A549 (cell line): ENCODE measurements at regions of chr4 and their contacts with region 1.

Region 1: DNA sequence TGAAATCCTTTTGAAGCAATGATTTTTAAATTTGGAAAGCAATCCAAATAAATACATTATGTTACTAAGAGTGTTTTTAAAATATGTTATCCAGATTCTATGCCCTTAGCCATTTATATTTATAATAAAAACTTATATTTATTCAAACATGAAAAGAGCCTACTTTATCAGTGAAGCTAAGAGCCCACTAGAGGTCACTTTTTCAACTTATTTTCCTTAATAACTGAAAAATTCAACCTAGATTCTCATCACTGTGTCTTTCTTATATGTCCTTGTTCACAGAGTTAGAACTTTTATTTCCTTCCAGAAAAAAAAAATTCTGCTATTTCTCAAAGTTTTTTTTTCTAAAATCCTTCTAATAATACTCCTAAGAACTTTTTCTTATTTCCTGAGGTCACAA is 23.9 kb downstream of the PRDM8 start:
- DNase-seq: no peak
- ATAC-seq: no peak
- H3K4me3 ChIP-seq: no peak overlapping the region
- H3K27ac ChIP-seq: no peak overlapping the region
- H3K4me1 ChIP-seq: no peaks in the 10 kb centered on the region
- CTCF ChIP-seq: peak; percentile 46
- EP300 ChIP-seq: no peak
- POLR2A ChIP-seq: no peak
- RAD21 ChIP-seq: peak; percentile 20 to 51; a peak in 3 of 5 replicates

Region 2: GRCh38 chr4:80322716-80323115 is 101.6 kb after region 1 on chr4:
- CTCF ChIA-PET with region 1: interaction called, 13 read pairs
- POLR2A ChIA-PET with region 1: no interaction called
- DNase-seq: no peak
- ATAC-seq: 0 out of 6 replicates have a peak, but pooled peaks of 1 of the 2 experiments have one; percentile 19
- H3K4me3 ChIP-seq: no peak overlapping the region
- H3K27ac ChIP-seq: no peak overlapping the region
- H3K4me1 ChIP-seq: no peaks in the 10 kb centered on the region
- CTCF ChIP-seq: no peak
- EP300 ChIP-seq: no peak
- POLR2A ChIP-seq: no peak
- RAD21 ChIP-seq: 0 out of 5 replicates have a peak, but pooled peaks of 1 of the 2 experiments have one; percentile 26

Region 3: GRCh38 chr4:80462621-80463091 is 241.5 kb after region 1 on chr4:
- CTCF ChIA-PET with region 1: no interaction called
- POLR2A ChIA-PET with region 1: no interaction called
- DNase-seq: no peak
- ATAC-seq: no peak
- H3K4me3 ChIP-seq: no peak overlapping the region
- H3K27ac ChIP-seq: no peak overlapping the region
- H3K4me1 ChIP-seq: no peaks in the 10 kb centered on the region
- CTCF ChIP-seq: no peak
- EP300 ChIP-seq: no peak
- POLR2A ChIP-seq: no peak
- RAD21 ChIP-seq: no peak